ENCODE measurements at regions of chr10 and their contacts with region 1.

Region 1: GRCh38 chr10:49220031-49220430 is 31.8 kb upstream of the TMEM273 start:
- DNase-seq: no peak
- ATAC-seq: no peak
- H3K4me3 ChIP-seq: no peak overlapping the region
- H3K27ac ChIP-seq: no peak overlapping the region
- H3K4me1 ChIP-seq: no peaks in the 10 kb centered on the region
- H3K27me3 ChIP-seq: no peaks in the 10 kb centered on the region
- CTCF ChIP-seq: no peak

Region 2: DNA sequence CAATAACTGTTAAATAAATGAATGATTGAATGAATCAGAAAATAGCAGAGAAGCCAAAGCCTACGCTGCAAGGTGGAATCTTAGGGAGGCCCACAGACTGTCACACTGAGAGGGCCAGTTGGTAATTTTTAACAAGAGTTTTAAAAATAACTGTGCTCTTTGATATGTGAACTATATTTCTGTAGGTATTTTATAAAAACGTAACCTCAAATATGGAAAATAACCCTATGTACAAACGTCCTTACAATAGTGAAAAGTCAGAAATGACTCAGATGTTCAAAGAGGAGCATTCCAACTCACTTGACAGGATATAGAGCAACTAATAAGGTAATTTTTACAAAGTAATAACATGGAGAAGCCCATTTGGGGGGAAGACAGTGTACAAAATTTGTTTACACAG is 12.9 kb before region 1 on chr10:
- intact Hi-C with region 1: no loop called
- DNase-seq: no peak
- ATAC-seq: no peak
- H3K4me3 ChIP-seq: no peak overlapping the region
- H3K27ac ChIP-seq: no peak overlapping the region
- H3K4me1 ChIP-seq: no peaks in the 10 kb centered on the region
- H3K27me3 ChIP-seq: no peaks in the 10 kb centered on the region
- CTCF ChIP-seq: no peak

Region 3: DNA sequence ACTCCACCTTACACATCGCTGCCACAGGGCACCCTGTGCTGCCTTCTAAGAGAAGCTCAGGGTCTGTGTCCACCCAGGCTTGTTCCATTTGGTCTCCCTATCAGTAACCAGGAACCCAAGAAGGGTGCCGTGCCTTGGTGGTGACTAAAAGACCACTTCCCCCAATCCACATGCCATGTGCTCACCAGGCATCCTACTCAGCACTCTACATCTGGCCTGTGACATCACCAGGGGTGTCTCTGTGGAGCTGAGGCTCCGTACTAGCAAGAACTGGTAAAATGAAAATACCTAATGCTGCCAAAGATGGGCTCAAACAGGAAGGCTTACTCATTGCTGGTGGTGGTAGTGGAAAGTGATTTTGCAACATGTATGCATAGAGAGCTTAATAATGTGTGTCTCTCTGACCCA is 60.0 kb after region 1 on chr10:
- intact Hi-C with region 1: no loop called
- DNase-seq: no peak
- ATAC-seq: peak; percentile 25 to 74 (median 69)
- H3K4me3 ChIP-seq: no peak overlapping the region
- H3K27ac ChIP-seq: peak overlapping the region; percentile 87
- H3K4me1 ChIP-seq: peaks cover 53% of the 10 kb centered on the region
- H3K27me3 ChIP-seq: no peaks in the 10 kb centered on the region
- CTCF ChIP-seq: no peak

Region 4: GRCh38 chr10:49398000-49398861 is 178.2 kb after region 1 on chr10:
- intact Hi-C with region 1: loop called in 1 of 2 experiments (anchors 10 kb)
- DNase-seq: peak; percentile 54 to 77
- ATAC-seq: peak; percentile 84 to 89 (median 85)
- H3K4me3 ChIP-seq: peak overlapping the region; percentile 52
- H3K27ac ChIP-seq: no peak overlapping the region
- H3K4me1 ChIP-seq: peaks cover 19% of the 10 kb centered on the region
- H3K27me3 ChIP-seq: peaks cover 0 to 91% (median 27%) of the 10 kb centered on the region in 3 donors
- CTCF ChIP-seq: no peak